ENCODE measurements at regions of chr22 and their contacts with region 1.

Region 1: DNA sequence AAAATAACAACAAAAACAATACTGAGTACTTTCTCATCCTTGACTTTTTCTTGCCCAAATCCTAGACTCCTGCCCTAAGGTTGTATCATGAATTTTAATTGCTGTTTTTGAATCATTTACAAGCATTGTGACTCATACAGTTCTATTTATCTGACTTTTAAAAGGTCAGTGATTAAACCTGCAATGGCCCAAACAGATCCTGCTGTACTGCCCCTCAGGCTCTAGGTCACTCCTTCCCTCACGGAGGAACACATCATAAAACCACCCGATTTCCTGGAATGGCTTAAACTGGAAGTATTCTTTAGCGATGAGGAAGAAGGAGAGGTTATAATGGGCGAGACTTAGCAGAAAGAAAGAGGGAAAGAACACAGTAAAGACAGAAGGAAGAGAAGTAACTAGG is 12.3 kb downstream of the ARFGAP3 start:
- DNase-seq: peak; percentile 39
- ATAC-seq: peak; percentile 40; the same call in 1 of the 2 replicates
- H3K4me3 ChIP-seq: no peak overlapping the region
- H3K27ac ChIP-seq: no peak overlapping the region
- H3K4me1 ChIP-seq: peaks cover 19% of the 10 kb centered on the region
- H3K27me3 ChIP-seq: no peaks in the 10 kb centered on the region
- CTCF ChIP-seq: no peak
- POLR2A ChIP-seq: no peak
- RAD21 ChIP-seq: no peak

Region 2: GRCh38 chr22:43066844-43067385 is 222.2 kb after region 1 on chr22:
- CTCF ChIA-PET with region 1: no interaction called
- POLR2A ChIA-PET with region 1: interaction called, 16 read pairs
- dilution Hi-C with region 1: no loop called
- in situ Hi-C with region 1: no loop called
- intact Hi-C with region 1: no loop called
- DNase-seq: peak; percentile 58
- ATAC-seq: peak; percentile 61
- H3K4me3 ChIP-seq: no peak overlapping the region
- H3K27ac ChIP-seq: no peak overlapping the region
- H3K4me1 ChIP-seq: peaks cover 2% of the 10 kb centered on the region
- H3K27me3 ChIP-seq: no peaks in the 10 kb centered on the region
- CTCF ChIP-seq: no peak
- POLR2A ChIP-seq: no peak
- RAD21 ChIP-seq: no peak